ENCODE measurements at regions of chr21 and their contacts with region 1.

Region 1: DNA sequence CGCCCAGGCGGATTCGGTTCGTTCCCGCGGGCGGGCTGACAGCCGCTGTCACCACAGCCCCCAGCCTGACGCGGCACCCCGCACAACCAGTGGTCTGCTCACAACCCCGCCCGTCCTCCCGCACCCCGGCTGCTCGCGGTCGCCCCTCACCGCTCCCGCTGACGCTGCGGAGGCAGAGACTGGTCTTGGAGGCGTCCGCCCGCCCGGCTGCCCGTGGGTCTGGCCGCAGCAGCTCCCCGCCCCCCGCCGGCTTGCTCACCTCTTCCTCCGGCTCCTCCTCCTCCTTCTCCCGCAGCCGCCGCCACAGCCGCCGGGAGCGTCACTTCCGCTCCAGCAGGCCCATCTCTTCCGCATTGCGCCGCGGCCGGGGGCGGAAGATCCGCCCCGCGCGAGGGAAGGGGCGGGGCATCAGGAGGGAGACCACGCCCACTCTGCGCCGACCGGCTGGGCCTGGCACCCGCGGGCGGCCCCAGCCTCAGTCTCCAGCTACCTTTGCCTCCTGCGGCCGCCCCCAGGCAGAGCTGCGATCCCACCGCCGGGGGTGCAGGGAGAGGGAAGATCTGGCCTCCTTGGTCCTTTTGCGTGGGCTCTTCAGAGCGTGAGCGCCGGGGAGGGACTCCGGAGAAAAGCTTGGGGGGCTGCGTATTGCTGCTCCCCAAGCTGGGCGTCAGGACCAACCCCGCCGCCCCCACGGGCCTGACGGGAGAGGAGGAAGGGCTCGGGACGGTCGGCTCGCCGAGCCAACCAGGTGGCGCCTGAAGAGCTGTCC is at the start of gene SYNJ1:
- DNase-seq: peak; percentile 97 to 99 (median 98)
- ATAC-seq: peak; percentile 96
- H3K4me3 ChIP-seq: peak within 1 kb of the TSS; percentile 85
- H3K27ac ChIP-seq: peak within 1 kb of the TSS; percentile 72
- H3K4me1 ChIP-seq: peaks cover 0 to 21% of the 10 kb centered on the region in 2 experiments; a peak in 2 of 5 replicates
- H3K27me3 ChIP-seq: no peaks in the 10 kb centered on the region
- CTCF ChIP-seq: no peak
- EP300 ChIP-seq: no peak; the same call in 1 of the 2 replicates
- POLR2A ChIP-seq: peak; percentile 87
- RAD21 ChIP-seq: no peak
- polyA plus RNA-seq, gene SYNJ1: 2.4 to 2.6 TPM

Region 2: DNA sequence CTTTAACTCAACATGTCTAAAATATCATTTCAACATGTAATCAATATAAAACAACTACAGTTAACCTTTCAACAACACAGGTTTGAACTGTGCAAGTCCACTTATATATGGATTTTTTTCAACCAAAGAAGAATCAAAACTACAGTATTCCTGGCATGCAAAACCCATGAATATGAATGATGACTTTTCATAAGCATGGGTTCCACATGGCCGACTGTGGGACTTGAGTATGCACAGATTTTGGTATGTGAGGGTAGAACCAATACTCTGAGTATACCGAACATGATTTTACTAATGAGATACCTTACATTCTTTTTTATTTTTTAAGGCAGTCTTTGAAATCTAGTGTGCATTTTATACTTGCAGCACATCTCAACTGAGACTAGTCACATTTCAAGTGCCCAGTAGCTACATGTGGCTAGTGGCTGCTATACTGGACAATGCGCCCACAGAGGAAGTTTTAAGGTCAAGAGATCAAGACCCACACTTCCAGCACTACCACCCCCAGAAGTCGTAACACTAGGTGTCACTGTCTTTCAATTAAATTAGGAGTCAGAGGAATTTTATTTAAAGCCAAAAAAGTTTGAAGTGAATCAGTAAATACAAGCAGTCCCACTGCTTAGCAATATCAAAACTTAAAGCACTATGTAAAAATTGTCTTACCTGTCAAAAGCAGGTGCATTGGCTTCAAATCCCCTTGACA is 40.1 kb before region 1 on chr21:
- CTCF ChIA-PET with region 1: no interaction called
- POLR2A ChIA-PET with region 1: interaction called, 4 read pairs
- in situ Hi-C with region 1: no loop called
- intact Hi-C with region 1: loop called (anchors 5 kb)
- DNase-seq: peak in 1 of 4 experiments; percentile 13
- ATAC-seq: no peak
- H3K4me3 ChIP-seq: no peak overlapping the region
- H3K27ac ChIP-seq: no peak overlapping the region
- H3K4me1 ChIP-seq: no peaks in the 10 kb centered on the region
- H3K27me3 ChIP-seq: no peaks in the 10 kb centered on the region
- CTCF ChIP-seq: peak in 2 of 3 experiments; percentile 20 to 32; a peak in 2 of 6 replicates
- EP300 ChIP-seq: no peak
- POLR2A ChIP-seq: no peak
- RAD21 ChIP-seq: peak in 1 of 2 experiments; percentile 32; a peak in 1 of 4 replicates

Region 3: DNA sequence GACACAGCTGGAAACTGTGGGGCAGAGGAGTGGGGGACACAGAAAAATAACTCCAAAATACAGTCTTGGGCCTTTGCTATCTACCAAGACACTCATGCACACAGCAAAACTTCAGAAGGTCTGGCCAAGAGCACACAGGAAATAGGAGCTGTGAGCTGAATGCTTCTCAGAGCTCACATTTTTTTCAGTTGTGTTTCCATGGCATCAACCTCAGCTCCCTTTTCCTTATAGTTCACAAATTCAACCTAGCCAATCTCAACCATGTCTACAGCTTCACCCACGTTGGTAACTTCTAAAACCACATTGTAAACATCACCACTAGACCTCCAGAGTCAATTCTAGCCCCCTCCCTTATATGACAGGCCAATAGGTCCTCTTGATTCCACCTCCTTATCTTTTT is 19.5 kb after region 1 on chr21:
- CTCF ChIA-PET with region 1: no interaction called
- POLR2A ChIA-PET with region 1: interaction called, 11 read pairs
- in situ Hi-C with region 1: no loop called
- intact Hi-C with region 1: no loop called
- DNase-seq: no peak
- ATAC-seq: no peak
- H3K4me3 ChIP-seq: no peak overlapping the region
- H3K27ac ChIP-seq: no peak overlapping the region
- H3K4me1 ChIP-seq: no peaks in the 10 kb centered on the region
- H3K27me3 ChIP-seq: no peaks in the 10 kb centered on the region
- CTCF ChIP-seq: no peak
- EP300 ChIP-seq: no peak
- POLR2A ChIP-seq: no peak
- RAD21 ChIP-seq: no peak